ENCODE measurements at regions of chr10 and their contacts with region 1.

Region 1: GRCh38 chr10:29304264-29305030 is 15.6 kb downstream of the LYZL1 start:
- DNase-seq: peak; percentile 44 to 84 (median 57)
- H3K4me3 ChIP-seq: no peak overlapping the region
- H3K27ac ChIP-seq: no peak overlapping the region
- H3K4me1 ChIP-seq: no peaks in the 10 kb centered on the region
- H3K27me3 ChIP-seq: no peaks in the 10 kb centered on the region
- CTCF ChIP-seq: peak; percentile 64 to 86 (median 82)
- POLR2A ChIP-seq: no peak

Region 2: GRCh38 chr10:28628184-28628893 is 676.1 kb before region 1 on chr10:
- intact Hi-C with region 1: loop called in 1 of 2 experiments (anchors 5 kb)
- DNase-seq: peak; percentile 76 to 91 (median 85)
- H3K4me3 ChIP-seq: no peak overlapping the region
- H3K27ac ChIP-seq: no peak overlapping the region
- H3K4me1 ChIP-seq: no peaks in the 10 kb centered on the region
- H3K27me3 ChIP-seq: no peaks in the 10 kb centered on the region
- CTCF ChIP-seq: peak; percentile 76 to 89 (median 86)
- POLR2A ChIP-seq: no peak

Region 3: DNA sequence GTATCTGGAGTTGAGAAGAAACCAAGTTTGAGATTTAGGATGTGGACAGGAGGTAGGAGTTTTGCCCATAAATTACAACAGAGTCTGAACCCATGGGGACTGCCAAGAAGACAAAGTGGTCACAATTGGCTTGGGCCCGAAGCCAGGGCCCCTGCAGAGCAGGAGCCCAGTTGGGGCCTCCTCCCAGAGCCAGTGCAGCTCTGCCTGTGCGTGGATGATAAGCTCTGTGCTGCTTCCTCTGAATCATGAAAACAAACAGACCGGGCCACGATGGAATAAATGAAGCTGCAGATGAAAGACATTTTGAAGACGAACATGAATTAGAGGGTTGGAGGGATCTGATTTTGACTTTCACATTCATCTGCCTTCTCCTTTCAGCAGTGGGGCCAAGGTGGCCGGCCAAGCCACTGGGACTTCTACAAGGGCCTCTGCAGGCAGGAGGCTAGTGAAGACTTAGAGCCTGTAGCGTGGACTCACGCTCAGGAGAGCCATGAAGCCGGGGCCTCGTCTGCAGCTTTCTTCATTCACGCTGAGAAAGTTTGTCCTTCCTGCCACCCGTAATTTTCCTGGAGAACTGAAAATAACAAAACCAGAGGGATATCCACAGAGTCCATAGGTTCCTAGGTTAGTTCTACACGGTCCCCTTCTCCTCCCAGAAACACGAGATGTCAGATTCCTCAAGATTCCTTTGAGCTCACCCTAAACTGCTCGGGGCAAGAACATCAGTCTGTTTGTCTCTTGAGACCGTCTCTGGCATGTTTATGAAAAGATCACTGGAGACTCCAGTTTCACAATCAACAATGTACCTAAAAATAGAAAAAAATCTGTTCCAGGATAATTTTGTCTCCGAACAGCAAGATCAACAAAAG is 172.3 kb before region 1 on chr10:
- intact Hi-C with region 1: loop called in 1 of 2 experiments (anchors 5 kb)
- DNase-seq: no peak
- H3K4me3 ChIP-seq: no peak overlapping the region
- H3K27ac ChIP-seq: no peak overlapping the region
- H3K4me1 ChIP-seq: no peaks in the 10 kb centered on the region
- H3K27me3 ChIP-seq: no peaks in the 10 kb centered on the region
- CTCF ChIP-seq: no peak
- POLR2A ChIP-seq: no peak